Right ventricle myocardium inferior (tissue), 1 donor: ENCODE measurements at regions of chr7 and their contacts with region 1.

Region 1: GRCh38 chr7:79452032-79452494 is 1.4 kb downstream of the MAGI2 start:
- DNase-seq: peak; percentile 91
- ATAC-seq: peak; percentile 82

Region 2: DNA sequence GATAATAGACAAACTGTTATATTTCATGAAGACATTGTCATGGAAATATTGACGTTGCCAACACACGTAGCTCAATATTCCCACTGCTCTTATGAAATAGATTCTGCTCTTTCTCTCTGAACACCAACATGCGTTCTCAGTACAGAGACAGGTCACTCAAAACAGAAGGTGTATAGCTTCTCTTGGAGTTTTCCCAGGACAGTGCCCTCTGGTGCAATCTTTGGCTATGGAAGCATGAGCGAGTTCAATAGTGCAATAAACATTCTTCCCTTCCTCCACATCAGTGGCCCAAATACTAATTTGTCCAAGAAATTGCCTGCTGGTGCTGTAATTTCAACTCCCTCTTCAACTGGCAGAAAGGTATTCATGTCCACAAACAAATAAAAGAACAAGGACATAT is 143.9 kb before region 1 on chr7:
- intact Hi-C with region 1: loop called (anchors 5 kb)
- DNase-seq: no peak
- ATAC-seq: peak; percentile 76

Region 3: DNA sequence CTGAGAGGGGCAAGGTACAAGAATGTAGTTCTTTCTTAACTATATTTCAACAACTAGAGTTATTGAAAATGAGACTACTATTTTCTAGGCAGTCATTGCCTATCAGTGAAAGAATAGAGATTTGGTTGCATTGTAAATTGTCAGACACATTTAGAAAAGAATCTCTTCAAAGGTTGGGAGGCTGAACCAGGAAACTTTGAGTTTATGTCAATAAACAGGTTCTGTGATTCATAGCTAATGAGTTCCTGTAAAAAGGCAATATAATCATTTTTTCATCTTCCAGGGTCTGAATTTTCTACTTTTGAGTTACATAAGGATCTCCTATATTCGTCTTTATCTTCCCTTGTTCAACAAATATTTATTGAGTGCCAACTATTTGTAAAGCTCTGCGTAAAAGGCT is 45.7 kb before region 1 on chr7:
- intact Hi-C with region 1: loop called (anchors 5 kb)
- DNase-seq: no peak
- ATAC-seq: no peak